Psoas muscle (tissue), 8 donors: ENCODE measurements at regions of chr1 and their contacts with region 1.

Region 1: DNA sequence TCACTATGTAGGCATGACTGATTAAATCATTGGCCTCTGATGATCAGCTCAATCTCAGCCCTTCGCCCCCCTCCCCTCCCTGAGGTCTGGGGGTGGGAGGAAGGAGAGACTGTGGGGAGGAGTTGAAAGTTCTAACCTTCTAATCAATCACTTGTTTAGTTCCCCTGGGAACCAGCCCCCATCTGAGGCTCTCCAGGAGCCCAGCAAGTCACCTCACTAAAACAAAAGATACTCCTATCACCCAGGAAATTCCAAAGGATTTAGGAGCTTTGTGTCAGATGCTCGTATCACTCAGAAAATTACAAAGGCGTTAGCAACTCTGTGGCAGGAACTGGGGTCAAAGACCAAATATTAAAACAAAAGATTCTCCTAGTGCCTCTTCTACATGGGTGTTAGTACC is 21.6 kb downstream of the SYF2 start:
- DNase-seq: no peak
- ATAC-seq: no peak
- H3K4me3 ChIP-seq: no peak overlapping the region
- H3K27ac ChIP-seq: no peak overlapping the region
- H3K4me1 ChIP-seq: no peaks in the 10 kb centered on the region
- H3K27me3 ChIP-seq: peaks cover 0 to 6% (median 2%) of the 10 kb centered on the region in 3 donors
- CTCF ChIP-seq: no peak

Region 2: GRCh38 chr1:24841593-24841992 is 369.1 kb before region 1 on chr1:
- intact Hi-C with region 1: loop called in 1 of 2 experiments (anchors 5 kb)
- DNase-seq: no peak
- ATAC-seq: no peak
- H3K4me3 ChIP-seq: no peak overlapping the region
- H3K27ac ChIP-seq: no peak overlapping the region
- H3K4me1 ChIP-seq: no peaks in the 10 kb centered on the region
- H3K27me3 ChIP-seq: no peaks in the 10 kb centered on the region
- CTCF ChIP-seq: no peak